ENCODE measurements at regions of chr1 and their contacts with region 1.

Region 1: DNA sequence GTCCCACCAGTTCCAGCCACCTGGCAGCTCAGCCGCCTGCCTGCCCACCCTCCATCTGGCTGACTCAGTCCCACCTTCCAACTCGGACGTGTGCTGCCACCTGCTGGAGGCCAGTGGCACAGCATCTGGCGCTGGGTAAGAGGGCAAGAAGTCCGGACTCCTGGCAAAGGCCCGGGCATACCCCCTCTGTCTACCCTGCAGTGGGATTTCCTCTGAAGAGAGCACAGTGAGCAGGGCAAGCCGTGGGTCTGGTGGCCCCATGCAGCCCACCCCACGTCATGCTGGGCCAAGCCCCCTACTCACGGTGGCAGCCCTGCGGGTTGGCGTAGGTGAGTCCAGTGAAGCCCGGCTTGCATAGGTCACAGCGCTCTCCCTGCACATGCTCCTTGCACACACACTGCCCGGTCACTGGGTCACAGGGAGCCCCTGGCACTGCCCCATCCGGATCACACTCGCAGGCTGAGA is 24.5 kb downstream of the LAMB3 start:
- DNase-seq: peak; percentile 55 to 84
- ATAC-seq: peak; percentile 51 to 57
- H3K4me3 ChIP-seq: peak overlapping the region; percentile 22 to 44 (median 42)
- H3K27ac ChIP-seq: peak overlapping the region; percentile 83 to 94 (median 93)
- H3K4me1 ChIP-seq: peaks cover 58 to 59% of the 10 kb centered on the region in 2 donors
- H3K27me3 ChIP-seq: no peaks in the 10 kb centered on the region
- CTCF ChIP-seq: peak; percentile 93 to 99 (median 98)
- POLR2A ChIP-seq: no peak

Region 2: GRCh38 chr1:209291715-209292114 is 336.0 kb before region 1 on chr1:
- in situ Hi-C with region 1: no loop called
- intact Hi-C with region 1: no loop called
- DNase-seq: no peak
- ATAC-seq: no peak
- H3K4me3 ChIP-seq: no peak overlapping the region
- H3K27ac ChIP-seq: no peak overlapping the region
- H3K4me1 ChIP-seq: no peaks in the 10 kb centered on the region
- H3K27me3 ChIP-seq: no peaks in the 10 kb centered on the region
- CTCF ChIP-seq: no peak
- POLR2A ChIP-seq: no peak

Region 3: GRCh38 chr1:209565759-209566678 is 61.7 kb before region 1 on chr1:
- in situ Hi-C with region 1: loop called in 2 of 4 experiments (anchors 10 kb)
- intact Hi-C with region 1: no loop called
- DNase-seq: peak; percentile 26 to 58
- ATAC-seq: peak; percentile 65 to 73
- H3K4me3 ChIP-seq: no peak overlapping the region
- H3K27ac ChIP-seq: no peak overlapping the region
- H3K4me1 ChIP-seq: no peaks in the 10 kb centered on the region
- H3K27me3 ChIP-seq: peaks cover 0 to 3% (median 0%) of the 10 kb centered on the region in 3 donors
- CTCF ChIP-seq: peak; percentile 21 to 67 (median 48)
- POLR2A ChIP-seq: no peak

Region 4: DNA sequence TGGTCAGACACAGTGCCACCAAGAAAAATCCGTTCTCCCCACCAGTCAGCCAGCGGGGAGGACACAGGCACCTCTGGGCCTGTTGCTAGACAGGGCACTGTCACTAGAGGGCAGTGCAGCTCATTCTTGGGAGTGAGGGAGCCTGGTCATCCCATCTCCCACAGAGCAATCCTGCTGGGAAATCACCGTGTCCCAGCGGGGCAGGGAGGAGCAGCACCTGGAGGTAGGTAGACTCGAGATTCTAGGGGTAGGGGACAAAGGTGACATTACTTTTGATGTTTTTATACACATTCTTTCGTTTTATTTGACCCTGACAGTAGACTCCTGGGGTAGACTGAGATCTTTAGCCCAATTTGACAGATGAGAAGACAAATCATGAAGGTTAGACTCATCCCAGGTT is 51.0 kb before region 1 on chr1:
- in situ Hi-C with region 1: loop called in 1 of 4 experiments (anchors 10 kb)
- intact Hi-C with region 1: loop called (anchors 1 kb)
- DNase-seq: peak; percentile 32 to 73
- ATAC-seq: peak; percentile 93 to 98
- H3K4me3 ChIP-seq: no peak overlapping the region
- H3K27ac ChIP-seq: no peak overlapping the region
- H3K4me1 ChIP-seq: no peaks in the 10 kb centered on the region
- H3K27me3 ChIP-seq: peaks cover 0 to 2% (median 2%) of the 10 kb centered on the region in 3 donors
- CTCF ChIP-seq: peak; percentile 80 to 94 (median 89)
- POLR2A ChIP-seq: no peak

Region 5: GRCh38 chr1:209601809-209602657 is 25.7 kb before region 1 on chr1:
- in situ Hi-C with region 1: no loop called
- intact Hi-C with region 1: loop called (anchors 1 kb)
- DNase-seq: peak; percentile 37 to 52
- ATAC-seq: peak; percentile 98 to 99
- H3K4me3 ChIP-seq: no peak overlapping the region
- H3K27ac ChIP-seq: no peak overlapping the region
- H3K4me1 ChIP-seq: no peaks in the 10 kb centered on the region
- H3K27me3 ChIP-seq: no peaks in the 10 kb centered on the region
- CTCF ChIP-seq: peak; percentile 76 to 90 (median 83)
- POLR2A ChIP-seq: no peak

Region 6: DNA sequence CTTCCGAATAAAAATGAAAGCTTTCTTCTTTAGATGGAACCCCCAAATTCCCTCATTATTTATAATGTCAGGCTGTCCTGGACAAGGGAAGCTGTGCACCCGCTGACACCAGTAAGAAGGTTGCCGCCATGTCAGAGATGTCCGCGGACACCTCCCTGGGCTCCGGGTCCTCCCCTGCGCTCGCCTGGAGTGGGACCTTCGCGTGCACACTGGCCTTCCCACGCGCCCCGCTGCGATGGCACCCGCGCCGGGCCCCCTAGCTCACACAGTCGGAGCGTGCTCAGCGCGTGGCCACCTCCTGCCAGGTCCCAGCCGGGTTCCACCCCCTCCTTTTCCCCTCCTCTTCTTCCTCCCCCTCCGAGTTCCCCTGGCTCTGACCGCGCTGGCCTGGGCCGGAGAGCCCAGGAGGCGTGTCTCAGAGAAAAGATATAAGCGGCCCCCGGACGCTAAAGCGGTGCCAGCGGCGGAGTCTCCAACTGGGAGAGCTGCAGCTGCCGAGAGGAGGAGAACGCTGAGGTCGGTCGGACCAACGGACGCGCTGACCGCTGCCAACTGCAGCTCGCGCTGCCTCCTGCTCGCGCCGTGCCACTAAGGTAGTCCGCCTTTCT is 47.3 kb after region 1 on chr1 and contains the start of gene G0S2:
- in situ Hi-C with region 1: loop called in 2 of 4 experiments (anchors 10 kb)
- intact Hi-C with region 1: loop called (anchors 2 kb)
- DNase-seq: peak; percentile 77 to 96
- ATAC-seq: peak; percentile 49 to 67
- H3K4me3 ChIP-seq: peak within 1 kb of the TSS; percentile 69 to 78 (median 73)
- H3K27ac ChIP-seq: peak within 1 kb of the TSS; percentile 95 to 96 (median 95)
- H3K4me1 ChIP-seq: peaks cover 58 to 59% of the 10 kb centered on the region in 2 donors
- H3K27me3 ChIP-seq: no peaks in the 10 kb centered on the region
- CTCF ChIP-seq: no peak
- POLR2A ChIP-seq: peak; percentile 81 to 95
- total RNA-seq, gene G0S2: 29.1 to 1,155 (median 83.4) TPM